ENCODE measurements at regions of chr3 and their contacts with region 1.

Region 1: DNA sequence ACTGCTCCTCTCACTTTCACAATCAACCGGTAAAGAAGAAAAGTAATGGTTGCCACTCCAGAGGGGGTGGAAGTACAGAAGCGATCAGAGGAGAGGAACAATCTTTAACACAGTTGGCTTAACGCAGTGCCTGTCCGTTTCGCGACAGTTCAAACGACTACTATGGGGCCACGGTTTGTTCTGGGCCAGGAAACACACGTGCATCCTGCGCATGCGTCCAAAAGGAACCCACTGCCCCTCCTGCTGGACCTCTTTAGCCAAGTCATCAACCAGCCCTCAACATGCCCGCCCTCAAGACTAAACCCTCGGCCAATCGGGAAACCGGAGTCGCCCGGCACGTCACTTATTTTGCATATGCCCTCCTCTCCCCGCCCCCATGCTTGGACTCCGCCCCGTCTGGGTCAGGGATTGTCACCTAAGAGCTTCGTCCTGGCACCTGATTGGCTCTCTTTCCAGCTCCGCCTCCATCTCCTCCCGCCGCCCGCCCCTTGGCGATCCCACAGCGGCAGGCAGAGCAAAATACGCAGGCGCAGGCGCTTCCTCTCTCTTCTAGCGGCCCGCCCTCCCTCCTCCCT is 345 bp upstream of the CDV3 start:
- DNase-seq: peak; percentile 99 to 100
- H3K4me3 ChIP-seq: peak overlapping the region; percentile 52
- H3K27ac ChIP-seq: peak overlapping the region; percentile 91
- H3K4me1 ChIP-seq: peaks cover 71% of the 10 kb centered on the region
- H3K27me3 ChIP-seq: no peaks in the 10 kb centered on the region
- CTCF ChIP-seq: no peak

Region 2: GRCh38 chr3:133443649-133444422 is 129.3 kb before region 1 on chr3:
- CTCF ChIA-PET with region 1: no interaction called
- POLR2A ChIA-PET with region 1: no interaction called
- intact Hi-C with region 1: loop called (anchors 1 kb)
- DNase-seq: peak; percentile 41 to 90
- H3K4me3 ChIP-seq: no peak overlapping the region
- H3K27ac ChIP-seq: peak overlapping the region; percentile 76
- H3K4me1 ChIP-seq: peaks cover 15% of the 10 kb centered on the region
- H3K27me3 ChIP-seq: no peaks in the 10 kb centered on the region
- CTCF ChIP-seq: peak; percentile 52

Region 3: GRCh38 chr3:133487920-133488540 is 85.1 kb before region 1 on chr3:
- CTCF ChIA-PET with region 1: interaction called, 10 read pairs
- POLR2A ChIA-PET with region 1: interaction called, 20 read pairs
- intact Hi-C with region 1: loop called (anchors 1 kb)
- DNase-seq: no peak
- H3K4me3 ChIP-seq: no peak overlapping the region
- H3K27ac ChIP-seq: no peak overlapping the region
- H3K4me1 ChIP-seq: peaks cover 15% of the 10 kb centered on the region
- H3K27me3 ChIP-seq: no peaks in the 10 kb centered on the region
- CTCF ChIP-seq: peak; percentile 71

Region 4: DNA sequence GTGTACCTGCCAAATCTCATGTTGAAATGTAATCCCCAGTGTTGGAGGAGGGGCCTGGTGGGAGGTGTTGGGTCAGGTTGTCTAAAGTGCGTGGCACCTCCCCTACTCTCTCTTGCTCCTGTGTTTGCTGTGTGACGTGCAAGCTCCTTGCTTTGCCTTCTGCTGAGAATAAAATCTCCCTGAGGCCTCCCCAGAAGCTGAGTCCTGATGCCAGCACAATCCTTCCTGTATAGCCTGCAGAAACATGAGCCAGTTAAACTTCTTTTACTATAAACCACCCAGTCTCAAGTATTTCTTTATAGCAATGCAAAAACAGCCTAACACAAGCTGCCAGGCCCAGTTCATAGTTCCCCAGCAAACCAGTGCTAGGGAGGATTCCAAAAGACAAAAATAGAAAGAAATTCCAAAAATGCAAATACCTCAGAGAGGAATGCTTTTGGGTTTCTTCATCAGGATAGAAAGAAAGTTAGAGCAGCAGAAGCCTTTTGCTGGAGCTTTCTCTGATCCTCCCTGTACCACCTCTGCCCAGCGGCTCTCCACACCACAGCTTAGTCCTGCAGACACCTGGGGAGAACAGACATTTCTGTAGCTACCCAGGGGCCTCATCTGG is 25.6 kb before region 1 on chr3:
- CTCF ChIA-PET with region 1: interaction called, 3 read pairs
- POLR2A ChIA-PET with region 1: interaction called, 13 read pairs
- intact Hi-C with region 1: loop called (anchors 2 kb)
- DNase-seq: peak; percentile 34 to 55
- H3K4me3 ChIP-seq: no peak overlapping the region
- H3K27ac ChIP-seq: peak overlapping the region; percentile 34
- H3K4me1 ChIP-seq: peaks cover 44% of the 10 kb centered on the region
- H3K27me3 ChIP-seq: no peaks in the 10 kb centered on the region
- CTCF ChIP-seq: no peak

Region 5: DNA sequence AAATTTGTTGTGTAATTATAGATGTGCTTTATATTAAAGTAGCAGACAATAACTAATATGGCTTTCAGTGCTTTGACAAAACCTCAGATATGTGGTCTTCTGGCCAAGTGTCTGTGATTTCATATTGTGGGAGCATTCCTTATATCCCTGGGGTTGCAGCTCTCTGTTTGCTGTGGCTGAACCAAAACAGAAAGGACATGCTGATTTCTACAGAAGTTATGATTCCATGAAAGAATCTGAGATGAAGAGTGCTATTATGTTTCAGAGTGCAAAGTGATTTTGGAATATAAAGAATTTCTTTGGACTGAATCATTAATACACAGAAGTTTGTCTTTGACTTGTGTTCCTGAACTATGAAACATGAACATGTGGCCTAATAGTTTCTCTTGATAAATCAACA is 36.9 kb after region 1 on chr3:
- CTCF ChIA-PET with region 1: no interaction called
- POLR2A ChIA-PET with region 1: interaction called, 10 read pairs
- intact Hi-C with region 1: no loop called
- DNase-seq: no peak
- H3K4me3 ChIP-seq: no peak overlapping the region
- H3K27ac ChIP-seq: no peak overlapping the region
- H3K4me1 ChIP-seq: no peaks in the 10 kb centered on the region
- H3K27me3 ChIP-seq: no peaks in the 10 kb centered on the region
- CTCF ChIP-seq: no peak

Region 6: DNA sequence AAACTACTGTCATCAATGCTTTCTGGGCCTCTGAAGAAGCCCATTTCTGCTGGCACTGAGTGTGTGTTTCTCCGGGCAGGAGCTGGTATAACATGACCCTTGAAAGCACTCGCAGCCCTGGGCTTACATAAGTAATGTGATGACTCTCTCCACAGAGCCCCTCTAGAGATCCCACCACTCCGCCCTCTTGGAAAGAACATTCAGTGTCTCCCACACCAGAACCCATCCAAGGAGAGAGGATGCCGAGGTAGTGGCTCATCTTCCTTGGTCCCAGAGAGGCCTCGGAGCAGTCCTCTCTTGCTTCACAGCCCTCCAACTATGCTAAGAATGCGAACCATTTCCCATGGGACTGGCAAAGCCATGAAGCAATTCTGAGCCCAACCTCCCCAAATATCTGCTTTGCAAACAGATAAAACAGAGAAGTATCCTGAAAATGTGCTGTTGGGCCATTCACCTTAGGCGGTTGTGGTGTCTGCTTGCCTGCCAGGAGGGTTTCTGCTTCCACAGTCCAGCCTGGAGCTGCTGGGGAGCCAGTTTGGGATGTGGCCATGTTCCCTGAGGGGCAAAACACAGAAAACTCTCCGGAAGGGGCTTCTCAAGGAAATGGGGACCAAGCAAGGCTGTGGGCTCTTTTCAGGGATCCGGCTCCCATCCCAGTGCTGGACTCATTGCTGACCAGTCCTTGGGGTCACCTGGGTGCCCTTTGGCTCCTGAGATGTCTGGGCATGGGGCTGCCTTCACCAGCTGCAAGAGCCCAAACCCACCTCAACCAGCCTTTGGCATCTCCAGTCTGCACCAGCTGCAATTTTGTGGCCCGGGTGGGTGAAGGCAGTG is 753.8 kb after region 1 on chr3:
- CTCF ChIA-PET with region 1: no interaction called
- POLR2A ChIA-PET with region 1: interaction called, 3 read pairs
- intact Hi-C with region 1: loop called (anchors 5 kb)
- DNase-seq: peak; percentile 86 to 98
- H3K4me3 ChIP-seq: peak overlapping the region; percentile 23; the same call in 1 of the 2 replicates
- H3K27ac ChIP-seq: peak overlapping the region; percentile 97
- H3K4me1 ChIP-seq: peaks cover 91% of the 10 kb centered on the region
- H3K27me3 ChIP-seq: no peaks in the 10 kb centered on the region
- CTCF ChIP-seq: no peak

Measured in PC-9 (cell line).